PC-9 (cell line): ENCODE measurements at regions of chr6 and their contacts with region 1.

Region 1: GRCh38 chr6:10310826-10311225 is 104.0 kb downstream of the TFAP2A start:
- DNase-seq: peak in 1 of 2 experiments; percentile 88
- H3K4me3 ChIP-seq: no peak overlapping the region
- H3K27ac ChIP-seq: peak overlapping the region; percentile 10; the same call in 1 of the 2 replicates
- H3K4me1 ChIP-seq: peaks cover 30% of the 10 kb centered on the region
- H3K27me3 ChIP-seq: no peaks in the 10 kb centered on the region
- CTCF ChIP-seq: no peak

Region 2: DNA sequence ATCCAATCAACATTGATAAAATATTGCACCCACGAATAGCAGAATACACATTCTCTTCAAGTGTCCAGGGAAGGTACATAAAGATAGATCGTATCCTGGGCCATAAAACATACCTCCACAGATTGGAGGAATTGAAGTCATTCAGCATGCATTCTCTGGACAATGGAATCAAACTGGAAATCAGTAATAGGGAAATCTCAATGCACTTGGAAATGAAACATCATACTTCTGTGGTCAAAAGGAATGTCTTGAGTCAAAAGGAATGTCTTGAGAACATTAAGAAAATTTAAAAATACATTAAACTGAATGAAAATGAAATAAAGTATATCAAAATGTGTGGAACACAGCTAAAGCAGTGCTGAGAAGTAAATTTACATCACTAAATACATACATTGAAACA is 34.7 kb before region 1 on chr6:
- CTCF ChIA-PET with region 1: no interaction called
- POLR2A ChIA-PET with region 1: no interaction called
- intact Hi-C with region 1: loop called (anchors 5 kb)
- DNase-seq: no peak
- H3K4me3 ChIP-seq: no peak overlapping the region
- H3K27ac ChIP-seq: no peak overlapping the region
- H3K4me1 ChIP-seq: no peaks in the 10 kb centered on the region
- H3K27me3 ChIP-seq: no peaks in the 10 kb centered on the region
- CTCF ChIP-seq: no peak